ENCODE measurements at regions of chr6 and their contacts with region 1.

Region 1: GRCh38 chr6:137866914-137867684 is at the start of gene TNFAIP3:
- DNase-seq: peak; percentile 49
- H3K4me3 ChIP-seq: peak within 1 kb of the TSS; percentile 86
- H3K27me3 ChIP-seq: no peaks in the 10 kb centered on the region
- CTCF ChIP-seq: peak; percentile 66
- polyA plus RNA-seq, gene TNFAIP3: 5.7 and 6.3 TPM in 2 replicates

Region 2: DNA sequence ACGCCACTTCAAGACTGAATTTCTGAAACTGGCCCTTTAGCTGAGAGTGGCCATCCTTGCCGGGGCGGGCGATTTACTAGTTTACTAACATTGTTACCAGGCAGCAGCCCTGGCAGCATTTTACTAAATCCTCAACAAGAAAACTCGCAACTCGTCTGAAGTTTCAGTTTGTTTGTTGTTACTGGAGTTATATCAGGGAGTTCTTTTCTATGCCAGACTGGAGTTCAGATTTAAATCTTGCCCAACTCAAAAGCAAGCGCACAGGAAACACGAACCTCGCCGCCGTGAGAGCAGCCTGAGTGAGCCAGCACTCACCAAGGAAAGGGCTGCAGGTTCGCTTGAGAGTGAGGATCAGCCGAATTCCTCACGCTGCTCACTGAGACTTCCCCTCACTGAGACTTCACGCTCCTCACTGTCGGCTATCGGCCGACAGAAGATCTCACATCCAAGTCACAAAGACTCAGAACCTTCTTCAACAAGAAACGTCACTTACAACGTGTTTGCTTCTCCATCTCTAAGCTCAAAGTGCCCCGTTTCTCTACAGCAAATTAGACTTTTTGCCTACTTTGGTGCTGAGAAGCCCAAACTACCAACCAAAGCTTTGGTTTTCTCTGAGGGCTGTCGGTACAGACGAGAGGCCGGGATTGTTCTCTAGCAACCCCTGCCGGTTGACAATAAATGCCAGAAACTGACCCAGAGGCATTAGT is 451.8 kb before region 1 on chr6:
- CTCF ChIA-PET with region 1: no interaction called
- POLR2A ChIA-PET with region 1: no interaction called
- DNase-seq: peak; percentile 8
- H3K4me3 ChIP-seq: peak overlapping the region; percentile 38
- H3K27me3 ChIP-seq: peaks cover 2% of the 10 kb centered on the region; the same call in 1 of the 2 replicates
- CTCF ChIP-seq: peak; percentile 81

Region 3: DNA sequence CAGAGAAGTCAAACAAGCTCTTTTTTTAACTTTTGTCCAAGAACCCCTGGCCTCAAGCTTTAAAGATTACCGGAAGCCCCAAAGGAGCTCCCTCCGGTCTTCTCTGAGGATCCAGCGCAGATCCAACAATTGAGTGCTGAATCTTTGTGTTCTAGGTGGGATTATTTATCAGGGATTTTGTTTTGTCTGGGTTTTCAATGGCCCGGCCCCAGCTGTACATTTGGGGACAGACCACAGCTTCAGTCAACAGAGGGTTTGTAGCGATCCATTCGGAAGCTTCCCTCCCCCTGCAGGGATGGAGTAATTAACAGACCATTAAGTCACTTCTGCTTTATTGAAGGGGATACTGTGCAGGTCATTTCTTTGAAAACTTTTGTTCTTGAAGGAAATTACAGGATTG is 380.7 kb before region 1 on chr6:
- CTCF ChIA-PET with region 1: no interaction called
- POLR2A ChIA-PET with region 1: no interaction called
- DNase-seq: no peak
- H3K4me3 ChIP-seq: no peak overlapping the region
- H3K27me3 ChIP-seq: peaks cover 41% of the 10 kb centered on the region
- CTCF ChIP-seq: no peak

Region 4: GRCh38 chr6:137697267-137697938 is 169.7 kb before region 1 on chr6:
- CTCF ChIA-PET with region 1: interaction called, 15 read pairs
- POLR2A ChIA-PET with region 1: no interaction called
- DNase-seq: no peak
- H3K4me3 ChIP-seq: no peak overlapping the region
- H3K27me3 ChIP-seq: no peaks in the 10 kb centered on the region
- CTCF ChIP-seq: peak; percentile 6; the same call in 1 of the 2 replicates

Region 5: DNA sequence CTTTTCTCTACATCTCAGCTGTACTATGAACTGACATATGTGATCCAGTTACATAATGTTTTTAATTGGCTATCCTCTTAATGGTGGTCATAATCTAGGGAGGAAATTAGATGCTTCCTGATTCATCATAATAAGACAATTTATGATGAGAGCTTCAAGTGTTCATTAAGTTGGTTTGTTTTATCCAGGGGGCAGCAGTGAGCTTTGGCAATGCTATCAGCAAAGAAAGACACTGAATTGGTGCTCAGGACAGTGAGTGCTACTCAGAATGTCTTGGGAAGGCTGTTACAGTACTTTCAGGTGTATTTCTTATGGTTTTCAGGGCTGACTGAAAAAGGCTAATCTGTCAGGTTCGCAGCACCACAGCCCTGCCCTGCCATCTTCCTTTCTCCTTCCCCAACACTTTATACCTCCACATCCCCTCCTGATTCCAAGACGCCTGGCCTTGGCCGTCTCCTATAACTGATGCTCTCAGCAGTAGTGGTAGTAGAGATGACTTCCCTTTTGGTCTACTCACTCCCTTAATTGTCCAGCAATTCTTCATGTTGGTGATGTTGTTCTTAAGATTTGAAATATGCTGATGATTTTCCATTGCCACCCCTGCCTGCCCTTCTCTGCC is 67.0 kb before region 1 on chr6:
- CTCF ChIA-PET with region 1: interaction called, 16 read pairs
- POLR2A ChIA-PET with region 1: no interaction called
- DNase-seq: no peak
- H3K4me3 ChIP-seq: no peak overlapping the region
- H3K27me3 ChIP-seq: no peaks in the 10 kb centered on the region
- CTCF ChIP-seq: peak; percentile 58

Region 6: GRCh38 chr6:137927777-137928218 is 60.7 kb after region 1 on chr6:
- CTCF ChIA-PET with region 1: interaction called, 19 read pairs
- POLR2A ChIA-PET with region 1: no interaction called
- DNase-seq: no peak
- H3K4me3 ChIP-seq: no peak overlapping the region
- H3K27me3 ChIP-seq: no peaks in the 10 kb centered on the region
- CTCF ChIP-seq: no peak

Region 7: DNA sequence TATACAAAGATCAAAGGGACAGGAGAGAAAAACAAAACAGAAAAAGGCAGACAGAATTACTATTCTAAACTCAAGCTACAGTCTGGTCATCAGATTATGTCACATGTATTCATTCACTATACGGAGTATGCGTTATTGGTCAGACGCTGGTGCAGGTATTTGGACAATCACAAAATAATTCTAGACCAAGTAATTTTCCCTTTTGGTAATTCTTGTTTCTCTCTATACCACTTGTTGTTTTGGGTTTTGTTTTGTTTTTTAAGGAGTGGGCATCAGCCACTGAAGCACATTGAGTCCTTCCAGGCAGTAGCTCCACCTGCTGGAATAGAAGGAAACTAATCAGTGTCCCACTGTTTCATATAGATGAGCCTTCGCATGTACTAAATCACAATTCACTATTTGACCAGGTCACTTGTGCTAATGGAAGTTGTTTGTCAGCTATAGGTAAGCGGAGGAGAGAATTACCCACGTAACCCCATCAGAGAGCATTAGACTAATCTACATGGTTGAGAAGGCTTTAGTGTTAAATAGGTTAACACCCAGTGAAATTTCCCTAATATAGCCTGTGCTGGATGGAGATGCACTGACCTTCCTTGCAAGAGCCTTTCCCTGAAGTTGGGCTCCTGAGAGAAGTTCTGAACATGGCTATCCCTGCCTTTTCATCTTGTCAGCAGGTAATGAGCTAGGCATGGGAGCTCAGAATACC is 77.8 kb after region 1 on chr6:
- CTCF ChIA-PET with region 1: interaction called, 38 read pairs
- POLR2A ChIA-PET with region 1: no interaction called
- DNase-seq: no peak
- H3K4me3 ChIP-seq: no peak overlapping the region
- H3K27me3 ChIP-seq: no peaks in the 10 kb centered on the region
- CTCF ChIP-seq: peak; percentile 80